Esophagus squamous epithelium (tissue), 5 donors: ENCODE measurements at regions of chr2 and their contacts with region 1.

Region 1: GRCh38 chr2:100262555-100263320 is 59.6 kb downstream of the LONRF2 start:
- DNase-seq: no peak
- H3K4me3 ChIP-seq: no peak overlapping the region
- H3K27ac ChIP-seq: no peak overlapping the region
- H3K4me1 ChIP-seq: peaks cover 0 to 4% (median 0%) of the 10 kb centered on the region in 3 donors
- H3K27me3 ChIP-seq: no peaks in the 10 kb centered on the region
- CTCF ChIP-seq: peak; percentile 88 to 99 (median 94)
- POLR2A ChIP-seq: no peak

Region 2: GRCh38 chr2:100376823-100377222 is 114.1 kb after region 1 on chr2:
- intact Hi-C with region 1: loop called (anchors 5 kb)
- DNase-seq: no peak
- H3K4me3 ChIP-seq: no peak overlapping the region
- H3K27ac ChIP-seq: no peak overlapping the region
- H3K4me1 ChIP-seq: no peaks in the 10 kb centered on the region
- H3K27me3 ChIP-seq: peaks cover 0 to 13% (median 0%) of the 10 kb centered on the region in 4 donors
- CTCF ChIP-seq: no peak
- POLR2A ChIP-seq: no peak